ENCODE measurements at regions of chr7 and their contacts with region 1.

Region 1: DNA sequence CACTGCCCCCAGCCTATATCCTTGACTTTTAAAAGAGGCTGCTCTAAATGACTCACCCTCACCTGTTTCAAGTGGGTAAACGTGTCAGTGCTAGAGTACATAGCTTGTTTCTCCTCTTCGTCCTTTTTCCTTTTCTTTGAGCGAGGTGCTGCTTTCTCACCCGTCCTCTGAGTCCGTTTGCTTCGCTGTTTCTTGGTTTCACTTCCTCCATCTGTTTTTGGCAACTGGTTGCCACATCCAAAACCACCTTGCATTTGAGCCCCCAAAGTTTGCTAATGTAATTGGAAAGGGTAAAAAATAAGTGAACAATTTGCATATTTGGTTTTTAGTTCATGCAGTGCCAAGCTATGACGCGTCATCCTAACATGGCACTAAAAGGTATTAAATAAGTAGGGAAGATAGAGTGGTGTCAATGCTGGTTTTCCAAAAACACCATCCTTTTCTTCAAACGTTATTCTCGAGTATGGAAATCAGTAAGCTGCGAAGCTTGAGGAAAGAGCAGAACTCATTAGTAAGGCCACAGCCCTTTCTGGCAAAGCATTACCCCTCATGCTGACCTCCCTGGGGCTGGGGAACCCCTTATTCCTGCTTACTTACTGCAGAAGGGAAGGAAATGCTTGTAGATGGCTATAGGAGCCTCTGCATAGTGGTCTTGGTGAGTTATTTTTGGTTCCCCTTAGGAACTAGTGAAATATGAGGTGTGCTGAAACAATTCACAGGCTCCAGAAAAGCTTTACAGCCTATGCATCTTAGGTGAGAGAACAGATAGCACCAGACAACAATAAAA is 133.5 kb downstream of the GALNT11 start:
- DNase-seq: no peak
- ATAC-seq: peak; percentile 47
- H3K4me3 Mint-ChIP-seq: peak overlapping the region; percentile 26
- H3K27ac Mint-ChIP-seq: peak overlapping the region; percentile 64
- H3K4me1 Mint-ChIP-seq: peaks cover 12% of the 10 kb centered on the region
- H3K27me3 Mint-ChIP-seq: no peaks in the 10 kb centered on the region

Region 2: DNA sequence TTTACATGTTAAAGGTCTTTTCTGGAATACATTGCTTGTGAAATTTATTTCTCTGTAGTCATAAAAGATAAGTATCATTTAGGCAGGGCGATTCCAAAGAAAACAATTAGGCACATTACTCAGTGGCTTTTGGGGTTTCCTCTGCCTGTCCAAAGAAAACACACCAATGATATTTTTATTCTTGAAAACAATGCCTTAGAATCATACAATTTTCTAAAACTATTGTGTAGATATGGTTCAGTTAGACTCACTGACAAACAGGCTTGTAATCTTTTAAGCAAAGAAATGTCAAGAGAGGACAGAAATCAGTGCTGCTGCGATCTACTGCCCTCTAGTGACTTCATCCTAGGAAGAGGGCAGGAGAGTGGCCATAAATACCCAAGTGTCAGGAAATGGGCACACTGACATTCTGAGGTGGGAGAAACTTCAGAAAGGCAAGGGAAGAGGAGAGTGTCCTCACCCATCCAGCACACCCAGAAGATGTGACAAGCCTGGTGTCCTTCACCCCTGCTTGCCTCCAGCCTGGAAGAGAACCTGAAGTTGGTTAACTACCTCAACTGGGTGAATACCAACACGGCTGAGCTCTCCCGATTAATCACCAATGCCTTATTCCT is 13.0 kb before region 1 on chr7:
- CTCF ChIA-PET with region 1: interaction called, 28 read pairs
- POLR2A ChIA-PET with region 1: interaction called, 3 read pairs
- DNase-seq: peak; percentile 45
- ATAC-seq: peak; percentile 47
- H3K4me3 Mint-ChIP-seq: no peak overlapping the region
- H3K27ac Mint-ChIP-seq: peak overlapping the region; percentile 18
- H3K4me1 Mint-ChIP-seq: peaks cover 37% of the 10 kb centered on the region
- H3K27me3 Mint-ChIP-seq: no peaks in the 10 kb centered on the region

Region 3: DNA sequence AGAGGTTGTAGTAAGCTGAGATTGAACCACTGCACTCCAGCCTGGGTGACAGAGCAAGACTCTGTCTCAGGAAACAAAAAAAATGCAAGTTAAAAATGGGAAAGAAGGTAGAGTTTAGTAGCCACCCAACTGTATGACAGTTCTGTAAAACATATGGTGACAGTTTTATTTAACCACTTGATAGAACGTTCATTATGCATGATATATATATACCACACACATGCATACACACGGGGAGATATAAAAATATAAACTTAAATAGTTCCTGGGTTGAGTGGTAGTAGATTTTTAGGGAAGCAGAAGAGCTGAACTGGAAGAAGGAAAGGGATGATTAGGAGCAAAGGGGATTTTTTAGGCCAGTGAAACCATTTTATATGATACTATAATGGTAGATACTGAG is 156.9 kb after region 1 on chr7:
- CTCF ChIA-PET with region 1: no interaction called
- POLR2A ChIA-PET with region 1: no interaction called
- DNase-seq: no peak
- ATAC-seq: no peak
- H3K4me3 Mint-ChIP-seq: no peak overlapping the region
- H3K27ac Mint-ChIP-seq: no peak overlapping the region
- H3K4me1 Mint-ChIP-seq: peaks cover 10% of the 10 kb centered on the region
- H3K27me3 Mint-ChIP-seq: no peaks in the 10 kb centered on the region